Activated CD4-positive, alpha-beta T cell treated with anti-CD3 and anti-CD28 coated beads, Interleukin-2, amount 10 ng/mL, durations not matched to agents 24 days and 14 days (primary cell): ENCODE measurements at regions of chr10 and their contacts with region 1.

Region 1: GRCh38 chr10:14528450-14528849 is 197.7 kb upstream of the FRMD4A start:
- DNase-seq: peak; percentile 79
- H3K4me3 Mint-ChIP-seq: peak overlapping the region; percentile 69
- H3K27ac Mint-ChIP-seq: peak overlapping the region; percentile 70
- H3K4me1 Mint-ChIP-seq: peaks cover 75% of the 10 kb centered on the region
- H3K27me3 Mint-ChIP-seq: no peaks in the 10 kb centered on the region

Region 2: DNA sequence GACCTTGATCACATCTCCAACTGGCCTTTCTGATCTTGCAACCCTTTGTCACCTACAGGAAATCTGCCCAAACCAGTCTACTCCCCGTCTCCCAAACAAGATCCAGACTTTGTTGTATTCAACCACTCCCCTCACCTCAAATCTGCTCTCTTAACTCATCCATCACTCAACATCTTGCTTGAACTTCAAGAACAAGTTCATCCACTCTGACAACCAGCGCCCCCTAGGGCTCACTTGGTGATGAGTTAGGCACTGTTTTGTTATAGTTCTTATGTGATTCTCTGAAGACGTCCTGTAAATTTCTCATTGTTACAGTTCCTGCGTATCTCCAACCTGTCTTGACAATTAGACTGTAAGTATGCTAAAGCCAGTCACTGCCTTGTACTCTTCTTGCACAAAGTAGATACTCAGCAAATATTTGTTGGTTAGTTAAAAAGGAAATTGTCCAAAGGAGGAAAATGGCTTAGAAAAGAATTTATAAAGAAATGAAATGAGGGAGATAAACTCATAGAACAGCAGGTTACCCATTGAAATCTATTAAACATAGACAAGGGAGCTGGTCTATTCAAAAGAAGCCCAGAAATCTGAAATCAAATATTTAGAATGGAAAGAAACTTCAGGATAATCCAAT is 203.0 kb before region 1 on chr10:
- intact Hi-C with region 1: no loop called
- DNase-seq: peak; percentile 83
- H3K4me3 Mint-ChIP-seq: no peak overlapping the region
- H3K27ac Mint-ChIP-seq: no peak overlapping the region
- H3K4me1 Mint-ChIP-seq: no peaks in the 10 kb centered on the region
- H3K27me3 Mint-ChIP-seq: peaks cover 31% of the 10 kb centered on the region

Region 3: DNA sequence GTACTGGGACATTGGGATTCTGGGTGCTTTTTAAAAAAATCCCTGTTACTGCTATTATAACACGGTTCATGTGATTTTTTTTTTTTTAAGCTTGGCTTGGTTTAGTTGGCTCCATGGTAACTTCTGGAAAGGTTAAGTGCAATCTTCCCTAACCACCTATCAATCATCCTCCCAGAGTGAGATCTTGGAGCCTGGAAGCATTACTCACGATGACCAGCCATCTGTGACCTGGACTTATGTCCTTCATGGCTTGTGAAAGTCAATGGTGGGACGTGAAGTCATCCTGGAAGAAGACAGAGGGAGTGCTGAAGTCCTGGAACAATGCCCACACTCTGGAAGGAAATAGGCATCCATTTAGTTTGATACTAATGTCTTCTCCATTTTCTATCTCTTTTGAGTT is 62.2 kb before region 1 on chr10:
- intact Hi-C with region 1: no loop called
- DNase-seq: no peak
- H3K4me3 Mint-ChIP-seq: no peak overlapping the region
- H3K27ac Mint-ChIP-seq: no peak overlapping the region
- H3K4me1 Mint-ChIP-seq: no peaks in the 10 kb centered on the region
- H3K27me3 Mint-ChIP-seq: peaks cover 18% of the 10 kb centered on the region

Region 4: DNA sequence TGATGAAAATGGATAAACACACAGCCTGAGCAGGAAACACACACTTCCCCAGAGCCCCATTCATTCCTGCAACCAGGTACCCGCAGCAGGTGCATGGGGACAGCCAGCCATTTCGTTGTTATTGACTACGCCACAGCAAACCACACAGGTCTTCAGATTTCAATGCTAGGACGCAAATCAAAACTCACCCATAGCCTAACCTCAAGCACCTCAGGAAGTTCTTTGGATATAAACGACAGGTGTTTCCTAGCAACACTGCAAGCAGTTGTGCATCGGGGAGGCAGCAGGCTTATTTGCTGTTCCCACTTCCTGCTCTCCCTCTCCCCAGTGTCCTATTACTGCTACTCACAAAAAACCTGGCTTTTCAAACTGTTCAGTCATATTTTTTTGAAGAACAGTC is 21.3 kb before region 1 on chr10:
- intact Hi-C with region 1: loop called (anchors 2 kb)
- DNase-seq: peak; percentile 85
- H3K4me3 Mint-ChIP-seq: peak overlapping the region; percentile 29
- H3K27ac Mint-ChIP-seq: peak overlapping the region; percentile 72
- H3K4me1 Mint-ChIP-seq: peaks cover 21% of the 10 kb centered on the region
- H3K27me3 Mint-ChIP-seq: no peaks in the 10 kb centered on the region

Region 5: DNA sequence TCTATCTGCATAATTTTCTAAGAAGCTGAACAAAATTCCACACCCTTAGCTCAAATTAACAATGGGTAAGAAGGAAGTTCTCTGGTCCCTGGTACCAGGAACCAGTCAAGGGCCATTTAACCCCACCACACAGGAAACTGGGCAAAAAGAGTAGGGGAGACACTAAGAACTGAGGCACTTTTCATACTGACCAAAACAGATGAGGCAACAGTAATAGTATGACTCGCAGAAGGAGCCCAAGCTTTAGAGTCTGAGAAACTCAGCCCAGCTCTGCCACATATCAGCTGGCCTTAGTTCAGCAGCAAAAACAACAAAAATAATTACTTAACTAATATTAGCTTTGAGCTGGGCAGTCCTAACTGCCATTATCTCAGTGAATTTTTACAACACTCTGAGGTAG is 25.0 kb after region 1 on chr10:
- intact Hi-C with region 1: no loop called
- DNase-seq: no peak
- H3K4me3 Mint-ChIP-seq: peak overlapping the region; percentile 24
- H3K27ac Mint-ChIP-seq: peak overlapping the region; percentile 78
- H3K4me1 Mint-ChIP-seq: peaks cover 69% of the 10 kb centered on the region
- H3K27me3 Mint-ChIP-seq: no peaks in the 10 kb centered on the region